Activated CD4-positive, alpha-beta T cell treated with anti-CD3 and anti-CD28 coated beads for 36 hours (primary cell): ENCODE measurements at regions of chr5 and their contacts with region 1.

Region 1: GRCh38 chr5:165393839-165394238 is 1888.4 kb downstream of the MAT2B start:
- DNase-seq: no peak
- ATAC-seq: no peak
- H3K4me3 Mint-ChIP-seq: no peak overlapping the region
- H3K27ac Mint-ChIP-seq: no peak overlapping the region
- H3K4me1 Mint-ChIP-seq: no peaks in the 10 kb centered on the region
- H3K27me3 Mint-ChIP-seq: no peaks in the 10 kb centered on the region

Region 2: GRCh38 chr5:164555809-164556208 is 838.0 kb before region 1 on chr5:
- CTCF ChIA-PET with region 1: no interaction called
- POLR2A ChIA-PET with region 1: no interaction called
- intact Hi-C with region 1: loop called in 1 of 2 experiments (anchors 10 kb)
- DNase-seq: no peak
- ATAC-seq: no peak
- H3K4me3 Mint-ChIP-seq: no peak overlapping the region
- H3K27ac Mint-ChIP-seq: no peak overlapping the region
- H3K4me1 Mint-ChIP-seq: no peaks in the 10 kb centered on the region
- H3K27me3 Mint-ChIP-seq: no peaks in the 10 kb centered on the region

Region 3: DNA sequence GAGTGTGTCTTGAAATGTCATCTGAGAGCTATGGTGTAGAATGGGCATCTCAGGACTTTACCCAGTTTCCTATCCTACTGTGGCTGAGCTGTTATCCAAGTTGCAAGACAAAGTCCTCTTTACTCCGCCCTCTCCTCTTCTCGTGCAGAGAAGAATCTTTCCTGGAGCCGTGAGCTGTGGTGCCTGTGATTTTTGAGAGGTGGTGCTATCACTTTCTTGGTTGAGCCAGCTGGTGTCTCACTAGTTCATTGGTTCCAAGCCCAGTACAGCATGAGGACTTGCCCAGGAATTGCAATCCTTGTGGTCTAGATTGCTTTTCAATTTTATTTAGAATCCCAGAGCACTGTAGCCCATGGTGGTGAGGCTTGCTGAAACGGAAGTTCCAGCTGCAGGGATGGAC is 411.9 kb after region 1 on chr5:
- CTCF ChIA-PET with region 1: no interaction called
- POLR2A ChIA-PET with region 1: no interaction called
- intact Hi-C with region 1: no loop called
- DNase-seq: no peak
- ATAC-seq: no peak
- H3K4me3 Mint-ChIP-seq: no peak overlapping the region
- H3K27ac Mint-ChIP-seq: no peak overlapping the region
- H3K4me1 Mint-ChIP-seq: no peaks in the 10 kb centered on the region
- H3K27me3 Mint-ChIP-seq: no peaks in the 10 kb centered on the region

Region 4: DNA sequence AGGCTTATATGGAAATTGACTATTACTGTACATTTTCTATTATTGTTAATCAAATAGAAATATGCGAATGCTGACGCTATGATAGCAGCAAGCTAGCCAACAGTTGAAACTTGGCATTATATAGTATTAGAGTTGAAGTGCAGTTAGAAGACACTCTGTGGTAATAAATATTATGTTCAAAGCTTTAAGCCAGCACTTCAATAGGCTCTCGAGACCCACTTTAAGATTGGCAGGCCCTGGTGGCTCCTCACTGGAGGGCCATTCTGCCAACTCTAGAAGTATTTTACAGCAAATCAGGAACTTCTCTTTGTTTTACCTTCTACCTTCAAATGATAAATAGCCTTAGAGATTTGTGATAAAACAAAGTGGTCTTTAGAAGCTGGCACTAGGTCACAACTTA is 868.6 kb after region 1 on chr5:
- CTCF ChIA-PET with region 1: no interaction called
- POLR2A ChIA-PET with region 1: no interaction called
- intact Hi-C with region 1: no loop called
- DNase-seq: no peak
- ATAC-seq: no peak
- H3K4me3 Mint-ChIP-seq: no peak overlapping the region
- H3K27ac Mint-ChIP-seq: no peak overlapping the region
- H3K4me1 Mint-ChIP-seq: no peaks in the 10 kb centered on the region
- H3K27me3 Mint-ChIP-seq: no peaks in the 10 kb centered on the region